Esophagus muscularis mucosa (tissue), 4 donors: ENCODE measurements at regions of chr9 and their contacts with region 1.

Region 1: GRCh38 chr9:116149844-116150243 is 3.7 kb upstream of the PAPPA start:
- DNase-seq: no peak
- H3K4me3 ChIP-seq: no peak overlapping the region
- H3K27ac ChIP-seq: no peak overlapping the region
- H3K4me1 ChIP-seq: peaks cover 0 to 17% (median 15%) of the 10 kb centered on the region in 4 donors
- H3K27me3 ChIP-seq: peaks cover 0 to 80% (median 7%) of the 10 kb centered on the region in 4 donors
- CTCF ChIP-seq: peak in 2 of 3 experiments; percentile 32 to 43
- EP300 ChIP-seq: no peak
- POLR2A ChIP-seq: no peak

Region 2: DNA sequence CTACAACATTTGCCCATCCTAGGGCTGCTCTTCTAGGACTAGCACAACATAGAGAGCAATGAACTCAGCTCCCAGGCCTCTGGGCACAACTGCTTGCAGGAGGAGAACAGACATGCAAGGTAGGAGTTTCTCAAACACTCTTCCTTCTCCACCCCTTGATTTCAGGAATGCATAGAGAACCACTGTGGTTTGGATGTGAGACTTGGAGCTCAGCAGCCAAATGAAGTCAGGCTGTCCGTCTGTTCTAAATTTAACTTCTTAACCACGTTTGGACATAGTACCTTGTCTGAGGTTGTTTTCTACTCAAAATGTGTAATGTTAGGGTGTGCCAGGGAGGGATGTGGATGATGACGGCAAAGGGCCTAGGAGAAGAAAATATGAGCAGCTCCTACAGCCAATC is 516.7 kb before region 1 on chr9:
- intact Hi-C with region 1: no loop called
- DNase-seq: no peak
- H3K4me3 ChIP-seq: no peak overlapping the region
- H3K27ac ChIP-seq: no peak overlapping the region
- H3K4me1 ChIP-seq: no peaks in the 10 kb centered on the region
- H3K27me3 ChIP-seq: no peaks in the 10 kb centered on the region
- CTCF ChIP-seq: no peak
- EP300 ChIP-seq: no peak
- POLR2A ChIP-seq: no peak

Region 3: GRCh38 chr9:116572095-116572748 is 422.4 kb after region 1 on chr9:
- intact Hi-C with region 1: loop called (anchors 10 kb)
- DNase-seq: peak; percentile 96
- H3K4me3 ChIP-seq: no peak overlapping the region
- H3K27ac ChIP-seq: no peak overlapping the region
- H3K4me1 ChIP-seq: peaks cover 9 to 20% (median 15%) of the 10 kb centered on the region in 4 donors
- H3K27me3 ChIP-seq: no peaks in the 10 kb centered on the region
- CTCF ChIP-seq: peak; percentile 71 to 80 (median 75)
- EP300 ChIP-seq: no peak
- POLR2A ChIP-seq: no peak

Region 4: GRCh38 chr9:116661037-116661954 is 511.5 kb after region 1 on chr9:
- intact Hi-C with region 1: loop called (anchors 5 kb)
- DNase-seq: no peak
- H3K4me3 ChIP-seq: no peak overlapping the region
- H3K27ac ChIP-seq: no peak overlapping the region
- H3K4me1 ChIP-seq: peaks cover 6 to 19% (median 10%) of the 10 kb centered on the region in 4 donors
- H3K27me3 ChIP-seq: no peaks in the 10 kb centered on the region
- CTCF ChIP-seq: peak; percentile 66 to 72 (median 66)
- EP300 ChIP-seq: no peak
- POLR2A ChIP-seq: no peak